MCF 10A (cell line): ENCODE measurements at regions of chr9 and their contacts with region 1.

Region 1: GRCh38 chr9:133347985-133348717 is at the starts of genes MED22 and RPL7A:
- DNase-seq: peak; percentile 95
- H3K4me3 Mint-ChIP-seq: peak within 1 kb of the TSS; percentile 88
- H3K27ac Mint-ChIP-seq: peak within 1 kb of the TSS; percentile 97
- H3K4me1 Mint-ChIP-seq: peaks cover 6% of the 10 kb centered on the region
- H3K27me3 Mint-ChIP-seq: no peaks in the 10 kb centered on the region
- CTCF ChIP-seq: no peak
- total RNA-seq, gene MED22: 29.3 and 32.6 TPM in 2 replicates
- total RNA-seq, gene RPL7A: 2,129 and 2,395 TPM in 2 replicates

Region 2: DNA sequence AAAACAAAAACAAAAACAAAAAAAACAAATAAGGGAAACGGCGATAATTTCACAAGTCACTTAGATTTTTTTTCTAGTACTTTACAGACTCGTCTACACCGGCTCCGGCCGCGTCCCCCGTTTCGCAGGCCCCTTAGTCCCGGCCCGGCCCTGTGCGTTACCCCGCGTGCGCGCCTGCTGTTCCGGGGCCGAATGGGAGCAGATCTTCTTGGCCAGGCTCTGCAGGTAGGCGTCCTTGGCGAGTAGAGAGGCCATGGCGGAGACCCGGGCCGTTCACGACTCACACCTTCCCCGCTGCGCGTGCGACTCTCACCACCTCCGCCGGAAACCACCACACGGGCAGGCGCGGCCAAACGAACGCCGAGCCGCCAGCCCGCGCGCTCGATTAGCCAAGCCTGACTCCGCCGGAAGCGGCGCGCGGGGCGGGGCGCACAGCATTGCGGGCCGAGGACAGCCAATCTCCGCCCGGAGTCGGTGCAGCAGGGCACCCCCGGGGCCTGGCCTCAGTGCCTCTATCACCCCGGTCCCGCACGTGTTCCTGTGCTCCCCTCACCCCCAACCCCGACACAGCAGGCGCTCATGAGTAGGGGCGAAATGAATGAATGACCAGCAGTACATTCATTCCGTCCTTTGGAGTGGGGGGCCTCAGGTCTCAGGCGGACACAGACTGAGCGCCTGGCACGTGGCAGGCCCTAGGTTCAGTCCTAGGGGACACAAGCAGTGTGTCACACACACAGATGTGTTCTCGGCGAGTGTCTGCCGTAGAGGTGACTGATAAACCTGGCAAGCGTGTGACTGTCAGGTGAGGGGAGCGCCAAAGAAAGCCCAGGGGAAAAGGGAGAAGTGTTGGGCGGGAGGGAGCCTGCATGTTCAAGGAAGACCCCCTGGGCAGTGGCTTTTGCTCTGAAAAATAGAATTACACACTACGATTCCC is 12.0 kb before region 1 on chr9 and contains the start of gene SURF6:
- CTCF ChIA-PET with region 1: interaction called, 4 read pairs
- POLR2A ChIA-PET with region 1: interaction called, 33 read pairs
- intact Hi-C with region 1: no loop called
- DNase-seq: peak; percentile 91
- H3K4me3 Mint-ChIP-seq: peak within 1 kb of the TSS; percentile 93
- H3K27ac Mint-ChIP-seq: peak within 1 kb of the TSS; percentile 81
- H3K4me1 Mint-ChIP-seq: peaks cover 6% of the 10 kb centered on the region
- H3K27me3 Mint-ChIP-seq: no peaks in the 10 kb centered on the region
- CTCF ChIP-seq: no peak
- total RNA-seq, gene SURF6: 30.2 and 40.5 TPM in 2 replicates

Region 3: GRCh38 chr9:133362359-133363044 is 14.4 kb after region 1 on chr9:
- CTCF ChIA-PET with region 1: no interaction called
- POLR2A ChIA-PET with region 1: interaction called, 48 read pairs
- intact Hi-C with region 1: no loop called
- DNase-seq: peak; percentile 36
- H3K4me3 Mint-ChIP-seq: no peak overlapping the region
- H3K27ac Mint-ChIP-seq: no peak overlapping the region
- H3K4me1 Mint-ChIP-seq: peaks cover 18% of the 10 kb centered on the region
- H3K27me3 Mint-ChIP-seq: no peaks in the 10 kb centered on the region
- CTCF ChIP-seq: no peak